Heart right ventricle (tissue), 16 donors: ENCODE measurements at regions of chr11 and their contacts with region 1.

Region 1: GRCh38 chr11:94623120-94623735 is 56.1 kb downstream of the PIWIL4 start:
- DNase-seq: peak in 1 of 2 donors; percentile 77
- ATAC-seq: peak; percentile 84 to 96 (median 94)
- H3K4me3 ChIP-seq: no peak overlapping the region
- H3K27ac ChIP-seq: no peak overlapping the region
- H3K4me1 ChIP-seq: peaks cover 0 to 6% (median 0%) of the 10 kb centered on the region in 9 donors
- H3K27me3 ChIP-seq: no peaks in the 10 kb centered on the region
- CTCF ChIP-seq: peak; percentile 74 to 95 (median 87)

Region 2: DNA sequence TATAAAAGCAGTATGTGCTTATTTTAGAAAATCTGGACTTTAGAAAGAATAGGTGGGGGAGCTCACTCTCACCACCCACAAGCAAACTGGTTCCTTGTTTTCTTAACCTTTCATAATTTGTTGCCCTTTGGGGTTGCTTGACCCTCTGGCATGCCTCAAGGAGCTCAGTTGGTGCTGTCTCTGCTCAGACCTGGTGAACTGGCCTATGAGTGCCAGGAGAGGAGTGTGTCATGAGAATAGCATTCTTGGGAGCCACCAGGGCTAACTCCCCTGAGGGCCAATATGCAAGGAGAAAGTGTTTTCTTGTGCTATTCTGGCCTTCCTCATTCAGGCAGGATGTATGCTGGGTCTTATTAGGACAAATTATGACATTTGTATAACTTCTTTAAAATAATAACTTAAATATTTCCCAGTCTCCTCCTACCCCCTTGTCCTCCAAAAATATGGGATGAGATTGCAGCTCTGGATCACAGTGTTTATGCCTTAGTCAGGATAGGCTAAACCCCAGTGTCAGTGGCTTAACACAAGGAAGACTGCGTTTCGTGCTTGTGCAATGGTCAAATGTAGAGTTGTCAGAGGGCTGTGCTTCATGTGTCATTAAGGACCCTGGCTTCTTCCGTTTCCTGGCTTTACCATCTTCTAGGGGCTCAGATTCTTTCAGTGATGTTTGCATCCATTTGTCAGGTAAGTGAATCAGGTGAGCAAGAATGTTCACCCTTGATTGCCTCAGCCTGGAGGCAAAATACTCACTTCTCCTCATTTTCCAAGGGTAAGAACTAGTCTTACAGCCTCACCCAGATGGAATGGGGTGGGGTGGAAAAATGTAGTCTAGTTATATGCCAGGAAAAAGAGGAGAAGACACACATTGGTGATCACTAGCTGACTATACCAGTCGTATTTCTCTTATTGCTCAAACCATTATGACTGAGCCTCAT is 124.2 kb after region 1 on chr11:
- intact Hi-C with region 1: no loop called
- DNase-seq: no peak
- ATAC-seq: no peak
- H3K4me3 ChIP-seq: no peak overlapping the region
- H3K27ac ChIP-seq: no peak overlapping the region
- H3K4me1 ChIP-seq: peaks cover 0 to 38% (median 20%) of the 10 kb centered on the region in 9 donors
- H3K27me3 ChIP-seq: no peaks in the 10 kb centered on the region
- CTCF ChIP-seq: no peak

Region 3: GRCh38 chr11:94762208-94762607 is 139.0 kb after region 1 on chr11:
- intact Hi-C with region 1: loop called in 9 of 10 experiments (anchors 2 to 10 kb)
- DNase-seq: no peak
- ATAC-seq: peak in 2 of 8 donors; percentile 40 to 48
- H3K4me3 ChIP-seq: no peak overlapping the region
- H3K27ac ChIP-seq: no peak overlapping the region
- H3K4me1 ChIP-seq: peaks cover 0 to 9% (median 2%) of the 10 kb centered on the region in 9 donors
- H3K27me3 ChIP-seq: no peaks in the 10 kb centered on the region
- CTCF ChIP-seq: peak; percentile 6 to 65 (median 49)

Region 4: DNA sequence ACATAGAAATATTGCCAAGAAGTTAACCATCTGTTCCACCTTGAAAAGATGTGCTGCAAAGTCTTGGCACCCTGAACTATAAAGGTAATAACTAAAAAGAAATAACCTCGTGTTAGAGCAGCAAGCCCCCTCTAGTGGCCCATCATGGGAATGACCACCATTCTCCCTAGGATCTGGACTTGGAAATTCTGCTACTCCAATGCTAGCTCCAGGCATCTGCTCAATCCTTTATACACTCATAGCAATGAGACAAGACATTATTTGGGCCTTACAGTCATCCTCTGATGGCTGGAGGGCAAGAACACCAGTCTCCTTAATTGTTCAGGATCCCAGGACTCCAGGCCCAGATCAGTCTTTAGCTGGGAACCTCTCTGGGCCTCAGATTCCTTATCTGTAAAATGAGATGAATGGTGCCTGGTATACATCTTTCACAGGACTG is 274.1 kb after region 1 on chr11:
- intact Hi-C with region 1: loop called (anchors 1 to 5 kb)
- DNase-seq: peak in 1 of 2 donors; percentile 59
- ATAC-seq: peak in 3 of 8 donors; percentile 42 to 62 (median 55)
- H3K4me3 ChIP-seq: no peak overlapping the region
- H3K27ac ChIP-seq: peak overlapping the region in 1 of 10 donors; percentile 4
- H3K4me1 ChIP-seq: peaks cover 0 to 9% (median 0%) of the 10 kb centered on the region in 9 donors
- H3K27me3 ChIP-seq: no peaks in the 10 kb centered on the region
- CTCF ChIP-seq: peak; percentile 77 to 96 (median 89)

Region 5: DNA sequence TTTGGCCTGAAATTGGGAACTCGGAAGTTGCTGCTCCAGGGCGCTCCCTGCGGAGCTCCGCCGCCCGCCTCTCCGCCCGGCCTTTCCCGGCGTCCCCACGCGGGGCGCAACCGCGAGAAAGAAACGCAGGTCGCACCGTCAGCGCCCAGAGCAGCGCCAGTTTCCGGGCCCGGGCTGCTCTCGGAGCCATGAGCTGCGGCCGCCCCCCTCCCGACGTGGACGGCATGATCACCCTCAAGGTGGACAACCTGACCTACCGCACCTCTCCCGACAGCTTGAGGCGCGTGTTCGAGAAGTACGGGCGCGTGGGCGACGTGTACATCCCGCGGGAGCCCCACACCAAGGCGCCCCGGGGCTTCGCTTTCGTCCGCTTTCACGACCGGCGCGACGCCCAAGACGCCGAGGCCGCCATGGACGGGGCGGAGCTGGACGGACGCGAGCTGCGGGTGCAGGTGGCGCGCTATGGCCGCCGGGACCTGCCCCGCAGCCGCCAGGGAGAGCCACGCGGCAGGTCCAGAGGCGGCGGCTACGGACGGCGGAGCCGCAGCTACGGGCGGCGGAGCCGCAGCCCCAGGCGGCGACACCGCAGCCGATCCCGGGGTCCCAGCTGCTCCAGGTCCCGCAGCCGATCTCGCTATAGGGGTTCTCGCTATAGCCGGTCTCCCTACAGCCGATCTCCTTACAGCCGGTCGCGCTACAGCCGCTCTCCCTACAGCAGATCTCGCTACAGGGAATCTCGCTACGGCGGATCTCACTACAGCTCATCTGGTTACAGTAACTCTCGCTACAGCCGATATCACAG is 444.0 kb after region 1 on chr11:
- intact Hi-C with region 1: loop called in 2 of 10 experiments (anchors 10 kb)
- DNase-seq: peak; percentile 83 to 88
- ATAC-seq: peak; percentile 87 to 95 (median 90)
- H3K4me3 ChIP-seq: peak overlapping the region; percentile 72 to 89 (median 82)
- H3K27ac ChIP-seq: peak overlapping the region; percentile 94 to 99 (median 97)
- H3K4me1 ChIP-seq: peaks cover 0 to 27% (median 20%) of the 10 kb centered on the region in 9 donors
- H3K27me3 ChIP-seq: no peaks in the 10 kb centered on the region
- CTCF ChIP-seq: peak; percentile 50 to 77 (median 61)

Region 6: DNA sequence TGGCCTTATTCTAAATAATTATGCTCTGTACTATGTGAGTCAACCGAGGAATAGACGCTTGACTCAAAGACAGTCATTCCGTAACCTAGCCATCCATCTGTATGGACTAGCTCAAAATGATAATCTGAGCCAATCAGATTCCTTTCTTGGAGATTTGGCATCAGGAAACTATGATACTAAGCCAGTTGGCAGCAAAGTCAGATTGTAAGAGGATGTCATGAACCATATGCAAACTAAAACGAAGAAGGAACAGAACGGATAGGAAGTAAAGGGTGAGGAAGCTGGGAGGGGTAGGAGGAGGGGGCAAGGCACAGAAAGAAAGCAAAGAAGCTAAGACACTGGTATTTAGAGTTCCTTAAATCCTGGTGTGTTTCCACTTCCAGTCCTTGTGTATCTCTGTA is 618.5 kb after region 1 on chr11:
- intact Hi-C with region 1: no loop called
- DNase-seq: no peak
- ATAC-seq: peak in 6 of 8 donors; percentile 41 to 65 (median 52)
- H3K4me3 ChIP-seq: peak overlapping the region in 1 of 10 donors; percentile 23
- H3K27ac ChIP-seq: peak overlapping the region in 5 of 10 donors; percentile 1 to 72 (median 9)
- H3K4me1 ChIP-seq: peaks cover 0 to 29% (median 0%) of the 10 kb centered on the region in 9 donors
- H3K27me3 ChIP-seq: no peaks in the 10 kb centered on the region
- CTCF ChIP-seq: no peak